HCT116 (cell line): ENCODE measurements at regions of chr11 and their contacts with region 1.

Region 1: GRCh38 chr11:65888163-65888814 is at the start of gene FIBP:
- DNase-seq: peak; percentile 91
- ATAC-seq: peak; percentile 65
- H3K4me3 ChIP-seq: peak within 1 kb of the TSS; percentile 90 to 92
- H3K27ac ChIP-seq: peak within 1 kb of the TSS; percentile 97
- H3K4me1 ChIP-seq: peaks cover 18 to 73% of the 10 kb centered on the region in 2 experiments
- H3K27me3 ChIP-seq: no peaks in the 10 kb centered on the region
- CTCF ChIP-seq: peak in 2 of 3 experiments; percentile 68 to 78; a peak in 4 of 6 replicates
- POLR2A ChIP-seq: peak; percentile 63
- RAD21 ChIP-seq: no peak
- total RNA-seq, gene FIBP: 96.0 TPM

Region 2: DNA sequence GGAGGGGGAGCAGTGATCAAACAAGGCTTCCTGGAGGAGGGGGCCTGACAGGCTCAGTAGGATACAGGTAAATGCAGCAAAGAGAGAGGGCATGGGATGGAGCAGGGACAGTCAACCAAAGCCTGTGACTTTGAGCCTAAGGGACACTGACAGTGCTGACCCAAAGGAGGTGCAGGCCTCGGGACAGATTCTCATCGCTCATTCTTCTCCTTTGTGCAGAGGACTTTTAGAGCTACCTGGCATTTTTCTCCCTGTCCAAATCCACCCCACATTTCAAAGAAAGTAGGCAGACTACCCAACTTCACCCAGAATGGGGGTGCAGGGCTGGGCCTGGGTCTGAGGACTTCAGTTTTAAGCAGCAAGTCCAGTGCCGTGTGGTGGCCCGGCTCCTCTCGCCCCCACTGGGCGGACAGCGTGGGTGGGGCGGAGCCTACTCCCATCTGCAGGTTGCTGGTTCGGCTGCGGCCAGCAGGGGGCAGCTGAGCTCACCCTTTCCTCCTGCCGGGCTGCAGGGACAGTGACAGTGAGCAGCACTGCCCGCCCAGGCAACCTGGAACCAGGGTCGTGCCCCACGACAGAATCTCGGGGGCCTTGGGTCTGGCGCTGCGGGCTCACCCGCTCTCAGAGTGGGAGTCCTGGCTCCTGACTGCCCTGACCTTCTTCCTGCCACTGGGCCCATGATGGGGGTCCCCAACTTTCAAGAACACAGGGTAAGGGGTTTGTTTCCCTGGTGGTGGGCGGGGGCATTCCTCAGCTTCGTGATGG is 472.0 kb before region 1 on chr11:
- CTCF ChIA-PET with region 1: no interaction called
- POLR2A ChIA-PET with region 1: no interaction called
- RAD21 ChIA-PET with region 1: no interaction called
- intact Hi-C with region 1: no loop called
- DNase-seq: peak; percentile 54
- ATAC-seq: peak; percentile 64
- H3K4me3 ChIP-seq: peak overlapping the region; percentile 7 to 29; a peak in 1 of 4 replicates
- H3K27ac ChIP-seq: peak overlapping the region; percentile 100
- H3K4me1 ChIP-seq: peaks cover 45 to 57% of the 10 kb centered on the region in 2 experiments
- H3K27me3 ChIP-seq: no peaks in the 10 kb centered on the region
- CTCF ChIP-seq: peak in 2 of 3 experiments; percentile 90 to 92; a peak in 4 of 6 replicates
- POLR2A ChIP-seq: no peak
- RAD21 ChIP-seq: no peak

Region 3: DNA sequence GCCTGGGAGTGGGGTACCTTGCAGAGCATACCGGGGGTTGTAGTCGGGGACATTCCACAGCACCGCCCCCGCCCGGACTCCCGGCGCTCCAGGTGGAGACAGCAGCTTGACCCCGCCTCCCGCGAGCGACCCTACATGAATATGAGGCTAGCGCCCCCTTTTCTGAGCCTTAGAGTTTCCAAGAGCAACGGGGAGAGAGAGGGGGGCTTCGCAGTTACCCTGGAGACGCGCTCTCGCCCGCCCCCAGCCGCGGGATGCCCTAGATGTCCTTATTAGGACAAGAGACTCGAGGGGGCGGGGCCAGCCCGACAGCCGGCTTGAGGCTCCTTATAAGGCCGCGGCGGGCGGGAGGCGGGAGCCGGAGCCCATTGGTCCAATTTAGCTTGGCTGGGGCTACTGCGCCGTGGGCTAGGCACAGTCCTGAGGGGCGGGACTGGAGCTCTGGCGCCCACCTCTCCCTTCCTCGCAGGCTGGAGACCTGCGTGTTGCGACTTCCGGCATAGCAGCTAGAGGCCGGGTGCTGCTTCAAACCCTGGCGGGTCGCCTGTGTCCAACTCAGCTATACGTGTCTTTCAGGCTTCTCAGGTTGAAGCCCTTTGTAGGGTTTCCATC is 29.0 kb before region 1 on chr11:
- CTCF ChIA-PET with region 1: interaction called, 82 read pairs
- POLR2A ChIA-PET with region 1: interaction called, 84 read pairs
- RAD21 ChIA-PET with region 1: interaction called in 1 of 2 experiments, 3 read pairs
- intact Hi-C with region 1: no loop called
- DNase-seq: peak; percentile 95
- ATAC-seq: peak; percentile 66
- H3K4me3 ChIP-seq: peak overlapping the region; percentile 85 to 100
- H3K27ac ChIP-seq: peak overlapping the region; percentile 97
- H3K4me1 ChIP-seq: peaks cover 23 to 44% of the 10 kb centered on the region in 2 experiments
- H3K27me3 ChIP-seq: no peaks in the 10 kb centered on the region
- CTCF ChIP-seq: no peak
- POLR2A ChIP-seq: peak; percentile 78
- RAD21 ChIP-seq: no peak

Region 4: DNA sequence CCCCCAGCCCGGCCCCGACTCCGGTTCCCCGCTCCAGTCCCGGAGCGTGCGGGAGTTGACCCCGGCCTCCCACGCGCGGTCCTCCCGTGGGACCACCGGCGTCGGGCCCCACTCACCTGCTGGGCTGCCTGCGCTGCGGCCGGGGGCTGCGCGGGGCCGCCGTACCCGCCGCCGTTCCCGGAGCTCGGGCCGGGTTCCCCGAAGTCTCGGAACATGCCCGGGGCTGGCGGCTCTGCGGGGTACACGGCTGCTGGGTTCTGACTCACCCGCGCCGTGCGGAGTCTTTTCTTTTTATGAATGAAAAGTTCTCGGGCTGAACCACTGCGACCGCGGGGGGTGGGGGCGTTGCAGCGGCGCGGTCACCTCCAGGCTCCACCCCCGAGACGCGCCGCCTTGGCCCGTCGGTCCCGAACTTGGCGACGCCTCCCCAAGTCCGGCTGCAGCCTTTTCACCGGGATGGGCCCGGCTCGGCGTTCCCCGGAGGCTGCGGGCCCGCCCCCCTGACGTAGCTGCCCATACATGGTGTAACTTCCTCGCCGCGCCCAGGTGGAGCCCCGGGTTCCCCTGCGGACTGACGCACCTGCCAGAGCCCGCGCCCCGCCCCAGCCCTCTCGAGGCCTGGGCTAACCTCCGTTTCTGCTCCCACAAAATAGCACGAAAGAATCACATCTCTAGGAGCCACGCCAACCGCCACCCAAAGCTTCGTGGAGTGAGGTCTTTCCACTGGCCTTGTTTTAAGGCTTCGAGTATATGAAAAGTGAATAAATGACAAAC is 12.0 kb after region 1 on chr11 and contains the start of gene FOSL1:
- CTCF ChIA-PET with region 1: interaction called, 6 read pairs
- POLR2A ChIA-PET with region 1: interaction called, 124 read pairs
- RAD21 ChIA-PET with region 1: interaction called in 1 of 2 experiments, 3 read pairs
- intact Hi-C with region 1: no loop called
- DNase-seq: peak; percentile 97
- ATAC-seq: peak; percentile 79
- H3K4me3 ChIP-seq: peak within 1 kb of the TSS; percentile 90 to 98
- H3K27ac ChIP-seq: peak within 1 kb of the TSS; percentile 99
- H3K4me1 ChIP-seq: peaks cover 51 to 85% of the 10 kb centered on the region in 2 experiments
- H3K27me3 ChIP-seq: no peaks in the 10 kb centered on the region
- CTCF ChIP-seq: no peak
- POLR2A ChIP-seq: peak; percentile 97
- RAD21 ChIP-seq: no peak
- total RNA-seq, gene FOSL1: 125 TPM

Region 5: GRCh38 chr11:65918211-65919145 is 30.2 kb after region 1 on chr11 and contains the start of gene C11orf68:
- CTCF ChIA-PET with region 1: interaction called, 15 read pairs
- POLR2A ChIA-PET with region 1: interaction called, 80 read pairs
- RAD21 ChIA-PET with region 1: interaction called, 3 to 10 read pairs
- intact Hi-C with region 1: loop called (anchors 1 kb)
- DNase-seq: no peak
- ATAC-seq: peak; percentile 41
- H3K4me3 ChIP-seq: peak within 1 kb of the TSS; percentile 94 to 95
- H3K27ac ChIP-seq: peak within 1 kb of the TSS; percentile 95
- H3K4me1 ChIP-seq: peaks cover 43 to 60% of the 10 kb centered on the region in 2 experiments
- H3K27me3 ChIP-seq: no peaks in the 10 kb centered on the region
- CTCF ChIP-seq: no peak
- POLR2A ChIP-seq: no peak
- RAD21 ChIP-seq: no peak
- total RNA-seq, gene C11orf68: 49.8 TPM

Region 6: GRCh38 chr11:65945430-65945911 is 57.2 kb after region 1 on chr11 and contains the start of gene TSGA10IP:
- CTCF ChIA-PET with region 1: no interaction called
- POLR2A ChIA-PET with region 1: no interaction called
- RAD21 ChIA-PET with region 1: no interaction called
- intact Hi-C with region 1: no loop called
- DNase-seq: no peak
- ATAC-seq: no peak
- H3K4me3 ChIP-seq: no peak within 1 kb of the TSS
- H3K27ac ChIP-seq: no peak within 1 kb of the TSS
- H3K4me1 ChIP-seq: no peaks in the 10 kb centered on the region
- H3K27me3 ChIP-seq: no peaks in the 10 kb centered on the region
- CTCF ChIP-seq: no peak
- POLR2A ChIP-seq: no peak
- RAD21 ChIP-seq: no peak
- total RNA-seq, gene TSGA10IP: not detected

Region 7: GRCh38 chr11:65988791-65989592 is 100.7 kb after region 1 on chr11:
- CTCF ChIA-PET with region 1: interaction called, 38 read pairs
- POLR2A ChIA-PET with region 1: interaction called, 8 read pairs
- RAD21 ChIA-PET with region 1: interaction called, 4 read pairs
- intact Hi-C with region 1: loop called (anchors 1 kb)
- DNase-seq: peak; percentile 95
- ATAC-seq: peak; percentile 98
- H3K4me3 ChIP-seq: no peak overlapping the region
- H3K27ac ChIP-seq: peak overlapping the region; percentile 39
- H3K4me1 ChIP-seq: peaks cover 0 to 8% of the 10 kb centered on the region in 2 experiments; a peak in 2 of 4 replicates
- H3K27me3 ChIP-seq: no peaks in the 10 kb centered on the region
- CTCF ChIP-seq: peak; percentile 88 to 100 (median 99)
- POLR2A ChIP-seq: no peak
- RAD21 ChIP-seq: peak; percentile 100

Region 8: GRCh38 chr11:66159324-66159984 is 271.2 kb after region 1 on chr11:
- CTCF ChIA-PET with region 1: no interaction called
- POLR2A ChIA-PET with region 1: no interaction called
- RAD21 ChIA-PET with region 1: no interaction called
- intact Hi-C with region 1: no loop called
- DNase-seq: no peak
- ATAC-seq: no peak
- H3K4me3 ChIP-seq: no peak overlapping the region
- H3K27ac ChIP-seq: no peak overlapping the region
- H3K4me1 ChIP-seq: peaks cover 0 to 6% of the 10 kb centered on the region in 2 experiments; a peak in 1 of 4 replicates
- H3K27me3 ChIP-seq: no peaks in the 10 kb centered on the region
- CTCF ChIP-seq: no peak
- POLR2A ChIP-seq: no peak
- RAD21 ChIP-seq: no peak